ENCODE measurements at regions of chr2 and their contacts with region 1.

Region 1: GRCh38 chr2:200713003-200713703 is 98.6 kb upstream of the BZW1 start:
- DNase-seq: peak; percentile 98
- ATAC-seq: peak; percentile 93
- H3K4me3 Mint-ChIP-seq: peak overlapping the region; percentile 70
- H3K27ac Mint-ChIP-seq: peak overlapping the region; percentile 100
- H3K4me1 Mint-ChIP-seq: peaks cover 47% of the 10 kb centered on the region
- H3K27me3 Mint-ChIP-seq: no peaks in the 10 kb centered on the region

Region 2: DNA sequence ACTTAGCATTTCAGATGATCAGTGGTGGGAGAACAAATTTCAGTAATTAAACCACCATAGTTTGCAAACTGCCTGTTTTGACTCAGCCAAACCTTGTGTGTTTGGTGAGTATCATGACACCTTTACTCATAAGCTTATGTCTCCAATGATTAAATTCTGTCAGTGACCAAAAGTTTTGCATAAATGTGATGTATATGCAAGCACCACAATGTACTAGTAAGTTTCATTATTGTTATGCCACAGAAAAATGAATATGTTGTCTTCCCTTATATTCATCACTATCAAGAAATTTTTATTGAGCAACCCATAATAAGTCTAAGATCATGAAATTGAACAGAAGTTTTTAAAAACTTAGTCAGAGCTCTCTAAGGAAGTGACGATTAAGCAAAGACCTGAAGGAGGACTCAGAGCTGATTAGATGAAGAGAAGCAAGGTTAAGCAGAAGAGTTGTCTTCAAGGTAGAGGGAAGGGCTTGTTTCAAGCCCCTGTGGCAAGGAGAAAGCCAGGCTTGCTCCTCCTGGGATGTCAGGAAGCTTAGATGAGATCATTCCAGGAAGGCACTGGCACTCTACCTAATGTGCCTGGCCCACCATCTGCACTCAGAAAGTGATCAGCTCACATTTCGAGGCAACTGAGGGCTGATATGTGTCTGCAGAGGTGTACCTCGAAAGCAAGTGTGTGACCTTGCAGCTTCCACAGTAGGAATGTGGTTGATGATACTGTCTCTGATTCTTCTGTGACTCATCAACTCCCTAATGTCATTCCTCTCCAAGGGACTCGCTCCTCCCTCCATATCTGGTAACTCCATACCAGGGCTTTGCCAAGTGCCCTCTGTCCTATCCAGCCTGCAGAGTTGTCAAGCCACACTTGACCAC is 258.0 kb before region 1 on chr2:
- CTCF ChIA-PET with region 1: no interaction called
- POLR2A ChIA-PET with region 1: no interaction called
- intact Hi-C with region 1: loop called in 1 of 2 experiments (anchors 5 kb)
- DNase-seq: peak; percentile 41
- ATAC-seq: peak; percentile 78
- H3K4me3 Mint-ChIP-seq: peak overlapping the region; percentile 10
- H3K27ac Mint-ChIP-seq: peak overlapping the region; percentile 96
- H3K4me1 Mint-ChIP-seq: peaks cover 33% of the 10 kb centered on the region
- H3K27me3 Mint-ChIP-seq: no peaks in the 10 kb centered on the region

Region 3: DNA sequence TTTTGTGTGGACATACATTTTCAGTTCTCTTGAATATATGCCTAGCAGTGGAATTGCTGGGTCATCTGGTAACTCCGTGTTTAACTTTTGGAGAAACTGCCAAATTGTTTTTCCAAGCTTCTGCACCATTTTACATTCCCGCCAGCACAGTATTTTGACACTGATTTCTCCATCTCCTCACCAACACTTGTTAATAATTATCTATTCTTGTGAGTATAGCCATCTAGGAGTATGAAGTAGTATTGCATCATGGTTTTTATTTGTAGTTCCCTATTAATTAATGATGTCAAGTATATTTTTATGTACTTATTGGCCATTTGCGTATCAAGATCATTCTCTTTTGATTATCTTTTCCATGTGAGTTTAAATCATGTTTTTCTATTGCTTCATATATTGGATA is 145.2 kb before region 1 on chr2:
- CTCF ChIA-PET with region 1: no interaction called
- POLR2A ChIA-PET with region 1: no interaction called
- intact Hi-C with region 1: no loop called
- DNase-seq: no peak
- ATAC-seq: no peak
- H3K4me3 Mint-ChIP-seq: no peak overlapping the region
- H3K27ac Mint-ChIP-seq: no peak overlapping the region
- H3K4me1 Mint-ChIP-seq: no peaks in the 10 kb centered on the region
- H3K27me3 Mint-ChIP-seq: no peaks in the 10 kb centered on the region

Region 4: GRCh38 chr2:200735061-200735460 is 21.9 kb after region 1 on chr2:
- CTCF ChIA-PET with region 1: interaction called, 11 read pairs
- POLR2A ChIA-PET with region 1: no interaction called
- intact Hi-C with region 1: loop called (anchors 1 kb)
- DNase-seq: peak; percentile 66
- ATAC-seq: peak; percentile 49
- H3K4me3 Mint-ChIP-seq: no peak overlapping the region
- H3K27ac Mint-ChIP-seq: peak overlapping the region; percentile 70
- H3K4me1 Mint-ChIP-seq: peaks cover 13% of the 10 kb centered on the region
- H3K27me3 Mint-ChIP-seq: peaks cover 14% of the 10 kb centered on the region

Region 5: GRCh38 chr2:200888704-200889625 is 175.8 kb after region 1 on chr2 and contains the starts of genes NIF3L1 and PPIL3:
- CTCF ChIA-PET with region 1: interaction called, 4 read pairs
- POLR2A ChIA-PET with region 1: interaction called, 5 read pairs
- intact Hi-C with region 1: loop called (anchors 1 kb)
- DNase-seq: peak; percentile 99
- ATAC-seq: peak; percentile 83
- H3K4me3 Mint-ChIP-seq: peak within 1 kb of the TSS; percentile 98
- H3K27ac Mint-ChIP-seq: peak within 1 kb of the TSS; percentile 100
- H3K4me1 Mint-ChIP-seq: peaks cover 46% of the 10 kb centered on the region
- H3K27me3 Mint-ChIP-seq: no peaks in the 10 kb centered on the region
- total RNA-seq, gene NIF3L1: 37.0 to 47.7 TPM
- total RNA-seq, gene PPIL3: 52.6 to 53.0 TPM

Region 6: DNA sequence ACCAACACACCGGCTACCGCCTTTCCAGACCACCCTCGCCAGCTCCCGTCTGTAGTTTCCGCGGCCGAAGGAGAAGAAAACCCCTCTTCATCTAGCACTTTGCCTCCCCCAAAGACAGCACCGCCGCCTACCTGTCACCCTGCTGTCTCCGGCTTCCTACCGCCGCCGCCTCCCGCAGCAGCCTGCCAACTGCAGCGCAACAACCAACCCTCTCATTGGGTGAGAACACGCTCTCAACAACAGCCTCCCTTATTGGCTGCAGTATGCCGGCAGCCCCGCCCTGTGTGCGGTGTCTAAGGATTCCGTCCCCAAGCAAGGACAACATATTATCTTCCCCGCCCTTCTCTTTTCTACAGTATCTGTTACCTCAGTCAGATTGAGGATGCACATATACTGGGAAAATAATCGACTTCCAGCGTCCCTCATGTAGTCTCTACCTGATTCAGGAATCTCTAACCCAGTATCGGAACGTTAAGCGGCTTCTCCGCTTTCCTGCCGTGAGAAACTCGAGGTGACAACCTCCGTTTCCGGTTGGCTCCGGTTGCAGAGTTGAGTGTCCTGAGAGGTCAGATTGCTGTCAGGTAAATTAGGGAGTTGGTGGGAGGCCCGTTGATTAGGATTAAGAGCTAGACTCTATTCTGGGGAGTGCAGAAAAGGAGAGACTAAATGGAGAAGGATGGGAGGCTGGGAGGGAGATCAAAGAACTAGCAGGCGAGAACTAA is 358.5 kb after region 1 on chr2 and contains the starts of genes HYCC2 and NDUFB3:
- CTCF ChIA-PET with region 1: interaction called, 5 read pairs
- POLR2A ChIA-PET with region 1: interaction called, 3 read pairs
- intact Hi-C with region 1: loop called (anchors 1 kb)
- DNase-seq: peak; percentile 95
- ATAC-seq: peak; percentile 94
- H3K4me3 Mint-ChIP-seq: peak within 1 kb of the TSS; percentile 97
- H3K27ac Mint-ChIP-seq: peak within 1 kb of the TSS; percentile 96
- H3K4me1 Mint-ChIP-seq: peaks cover 58% of the 10 kb centered on the region
- H3K27me3 Mint-ChIP-seq: no peaks in the 10 kb centered on the region
- total RNA-seq, gene HYCC2: 15.8 to 16.0 TPM
- total RNA-seq, gene NDUFB3: 126 to 150 TPM

Region 7: GRCh38 chr2:201130524-201131186 is 417.5 kb after region 1 on chr2:
- CTCF ChIA-PET with region 1: no interaction called
- POLR2A ChIA-PET with region 1: no interaction called
- intact Hi-C with region 1: loop called (anchors 1 kb)
- DNase-seq: peak; percentile 62
- ATAC-seq: peak; percentile 48
- H3K4me3 Mint-ChIP-seq: peak overlapping the region; percentile 81
- H3K27ac Mint-ChIP-seq: peak overlapping the region; percentile 95
- H3K4me1 Mint-ChIP-seq: peaks cover 65% of the 10 kb centered on the region
- H3K27me3 Mint-ChIP-seq: no peaks in the 10 kb centered on the region

Region 8: DNA sequence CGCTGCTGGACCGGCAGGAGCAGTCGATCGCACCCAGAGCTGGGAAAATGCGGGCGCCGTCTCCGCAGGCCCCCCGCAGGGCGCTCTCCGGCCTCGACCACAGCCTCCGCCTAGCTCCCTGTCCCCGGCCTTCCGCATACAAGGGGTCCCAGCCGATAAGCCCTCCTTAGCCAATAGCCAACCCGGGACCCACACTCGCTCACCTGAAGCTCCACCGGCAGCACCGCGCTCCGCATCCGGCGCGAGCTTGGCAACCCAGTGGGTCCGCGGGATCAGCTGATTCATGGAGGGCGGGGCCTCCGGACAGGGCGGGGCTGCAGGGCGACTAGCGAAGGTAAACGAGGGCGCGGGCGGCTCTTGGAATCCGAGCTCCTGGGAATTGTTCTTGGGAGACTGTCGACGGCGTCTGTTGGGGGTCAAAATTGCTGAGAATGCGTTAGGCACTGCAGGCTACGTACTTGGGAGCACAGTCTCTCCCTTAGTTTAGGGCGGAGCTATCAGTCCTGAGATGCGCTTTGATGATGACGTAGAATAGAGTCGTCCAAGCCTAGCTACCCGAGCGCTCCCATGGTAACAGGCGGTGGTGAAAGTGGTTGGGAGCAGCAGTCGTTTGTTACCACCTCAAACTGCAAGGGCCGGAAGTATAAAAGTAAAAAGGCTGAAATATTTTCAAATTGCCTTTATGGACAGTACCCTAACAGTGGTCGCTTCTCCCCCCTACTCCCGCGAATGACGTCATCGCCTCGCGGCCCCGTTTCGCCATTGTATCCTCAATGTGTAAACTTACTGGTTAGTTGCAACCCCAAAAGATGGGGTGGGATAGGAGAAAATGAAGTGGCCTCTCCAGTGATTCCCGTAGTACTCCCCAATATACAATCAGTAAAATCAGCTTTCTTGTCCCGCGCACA is 1067.8 kb after region 1 on chr2 and contains the start of gene ALS2:
- CTCF ChIA-PET with region 1: no interaction called
- POLR2A ChIA-PET with region 1: no interaction called
- intact Hi-C with region 1: loop called in 1 of 2 experiments (anchors 2 kb)
- DNase-seq: peak; percentile 96
- ATAC-seq: peak; percentile 95
- H3K4me3 Mint-ChIP-seq: peak within 1 kb of the TSS; percentile 84
- H3K27ac Mint-ChIP-seq: peak within 1 kb of the TSS; percentile 92
- H3K4me1 Mint-ChIP-seq: peaks cover 25% of the 10 kb centered on the region
- H3K27me3 Mint-ChIP-seq: peaks cover 7% of the 10 kb centered on the region
- total RNA-seq, gene ALS2: 12.3 to 12.4 TPM

Measured in activated CD4-positive, alpha-beta T cell treated with anti-CD3 and anti-CD28 coated beads for 36 hours (primary cell).